ENCODE measurements at regions of chr19 and their contacts with region 1.

Region 1: GRCh38 chr19:35856546-35857149 is at the start of gene KIRREL2:
- DNase-seq: no peak
- H3K4me3 ChIP-seq: no peak within 1 kb of the TSS
- H3K27ac ChIP-seq: no peak within 1 kb of the TSS
- H3K4me1 ChIP-seq: no peaks in the 10 kb centered on the region
- H3K27me3 ChIP-seq: peaks cover 92% of the 10 kb centered on the region
- CTCF ChIP-seq: no peak
- total RNA-seq, gene KIRREL2: not detected in 2 replicates

Region 2: GRCh38 chr19:35716801-35717666 is 139.6 kb before region 1 on chr19:
- CTCF ChIA-PET with region 1: no interaction called
- POLR2A ChIA-PET with region 1: no interaction called
- intact Hi-C with region 1: no loop called
- DNase-seq: peak; percentile 83 to 89
- H3K4me3 ChIP-seq: peak overlapping the region; percentile 85
- H3K27ac ChIP-seq: peak overlapping the region; percentile 45
- H3K4me1 ChIP-seq: peaks cover 20% of the 10 kb centered on the region
- H3K27me3 ChIP-seq: no peaks in the 10 kb centered on the region
- CTCF ChIP-seq: peak; percentile 91

Region 3: DNA sequence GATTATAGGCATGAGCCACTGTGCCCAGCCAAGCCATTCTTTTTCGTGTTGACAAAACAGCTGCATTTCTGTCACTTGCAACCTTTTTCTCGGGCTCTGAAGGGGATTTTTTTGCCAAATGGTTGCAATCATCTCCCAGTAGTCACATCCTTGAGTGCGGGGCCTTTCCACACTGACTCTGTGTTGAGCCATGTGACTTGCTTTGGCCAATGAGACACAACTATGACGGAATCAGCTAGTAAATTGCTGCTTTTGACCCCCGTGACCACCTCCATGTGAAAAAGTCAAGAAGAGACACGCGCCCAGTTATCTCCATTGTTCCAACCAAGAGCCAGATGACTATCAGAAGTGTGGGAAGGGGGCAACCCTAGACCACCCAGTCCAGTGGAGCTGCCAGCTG is 22.7 kb before region 1 on chr19:
- CTCF ChIA-PET with region 1: interaction called, 14 read pairs
- POLR2A ChIA-PET with region 1: no interaction called
- intact Hi-C with region 1: no loop called
- DNase-seq: no peak
- H3K4me3 ChIP-seq: no peak overlapping the region
- H3K27ac ChIP-seq: no peak overlapping the region
- H3K4me1 ChIP-seq: no peaks in the 10 kb centered on the region
- H3K27me3 ChIP-seq: peaks cover 88% of the 10 kb centered on the region
- CTCF ChIP-seq: no peak

Region 4: GRCh38 chr19:35882114-35882832 is 25.6 kb after region 1 on chr19:
- CTCF ChIA-PET with region 1: no interaction called
- POLR2A ChIA-PET with region 1: no interaction called
- intact Hi-C with region 1: no loop called
- DNase-seq: peak in 1 of 2 experiments; percentile 33
- H3K4me3 ChIP-seq: no peak overlapping the region
- H3K27ac ChIP-seq: no peak overlapping the region
- H3K4me1 ChIP-seq: no peaks in the 10 kb centered on the region
- H3K27me3 ChIP-seq: peaks cover 23% of the 10 kb centered on the region
- CTCF ChIP-seq: peak; percentile 74

Measured in PC-9 (cell line).